Left lung (tissue), 14 donors: ENCODE measurements at regions of chr18 and their contacts with region 1.

Region 1: DNA sequence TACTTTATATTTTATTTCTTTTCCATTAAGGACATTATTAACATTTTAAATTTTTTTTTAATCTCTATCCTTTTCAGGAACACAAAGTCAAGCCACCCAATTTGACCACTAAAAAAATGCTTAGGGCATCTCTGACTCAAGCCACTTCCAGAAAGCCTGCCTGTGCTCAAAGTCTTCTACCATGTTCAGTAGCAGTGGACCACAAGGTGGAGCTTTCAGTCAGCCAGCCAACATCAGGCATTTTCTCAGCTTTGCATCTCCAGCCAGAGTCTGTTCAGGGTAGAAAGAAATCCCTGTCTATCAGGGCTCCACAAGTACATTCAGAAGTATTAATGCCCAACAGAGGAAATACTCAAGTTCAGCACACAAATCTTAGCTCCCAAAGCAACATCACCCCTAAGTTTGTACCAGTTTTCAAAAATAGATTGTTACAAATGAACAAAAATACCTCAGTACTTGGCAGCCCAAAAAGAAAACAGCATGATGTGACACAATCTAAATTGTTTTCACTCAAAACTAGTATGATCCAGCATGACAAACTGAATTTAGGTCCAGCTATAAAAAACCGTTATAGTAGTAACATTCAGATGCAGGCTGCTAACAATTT is 37.6 kb downstream of the C18orf63 start:
- DNase-seq: peak in 3 of 4 donors; percentile 46 to 84 (median 54)
- ATAC-seq: peak; percentile 95
- H3K4me3 ChIP-seq: no peak overlapping the region
- H3K27ac ChIP-seq: no peak overlapping the region
- H3K4me1 ChIP-seq: no peaks in the 10 kb centered on the region
- H3K27me3 ChIP-seq: no peaks in the 10 kb centered on the region
- CTCF ChIP-seq: peak; percentile 55 to 60

Region 2: GRCh38 chr18:74472312-74472711 is 119.0 kb after region 1 on chr18:
- intact Hi-C with region 1: loop called in 1 of 2 experiments (anchors 5 kb)
- DNase-seq: no peak
- ATAC-seq: no peak
- H3K4me3 ChIP-seq: no peak overlapping the region
- H3K27ac ChIP-seq: no peak overlapping the region
- H3K4me1 ChIP-seq: no peaks in the 10 kb centered on the region
- H3K27me3 ChIP-seq: no peaks in the 10 kb centered on the region
- CTCF ChIP-seq: no peak

Region 3: DNA sequence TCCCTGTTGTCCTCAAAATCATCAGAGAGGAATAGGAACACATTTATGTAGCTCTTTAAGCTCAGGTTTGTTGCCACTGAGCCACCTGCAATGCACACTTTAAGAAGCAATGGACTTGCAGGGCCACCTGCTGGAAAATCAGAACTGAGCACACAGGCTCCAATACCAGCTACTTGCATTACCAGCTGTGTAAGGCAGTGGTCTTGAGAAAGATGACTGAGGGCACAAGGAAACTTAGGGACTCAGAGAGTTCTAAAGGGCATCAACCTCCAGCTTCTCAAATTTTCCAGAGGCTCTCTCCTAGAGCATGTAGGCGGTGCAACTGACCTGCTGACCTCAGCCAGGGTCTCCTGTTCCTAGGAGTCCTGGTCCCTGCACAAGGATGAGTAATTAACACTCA is 140.4 kb after region 1 on chr18:
- intact Hi-C with region 1: loop called in 1 of 2 experiments (anchors 5 kb)
- DNase-seq: peak in 1 of 4 donors; percentile 62
- ATAC-seq: no peak
- H3K4me3 ChIP-seq: no peak overlapping the region
- H3K27ac ChIP-seq: no peak overlapping the region
- H3K4me1 ChIP-seq: peaks cover 13 to 28% of the 10 kb centered on the region in 2 donors
- H3K27me3 ChIP-seq: peaks cover 0 to 4% of the 10 kb centered on the region in 2 donors
- CTCF ChIP-seq: peak; percentile 43 to 44

Region 4: DNA sequence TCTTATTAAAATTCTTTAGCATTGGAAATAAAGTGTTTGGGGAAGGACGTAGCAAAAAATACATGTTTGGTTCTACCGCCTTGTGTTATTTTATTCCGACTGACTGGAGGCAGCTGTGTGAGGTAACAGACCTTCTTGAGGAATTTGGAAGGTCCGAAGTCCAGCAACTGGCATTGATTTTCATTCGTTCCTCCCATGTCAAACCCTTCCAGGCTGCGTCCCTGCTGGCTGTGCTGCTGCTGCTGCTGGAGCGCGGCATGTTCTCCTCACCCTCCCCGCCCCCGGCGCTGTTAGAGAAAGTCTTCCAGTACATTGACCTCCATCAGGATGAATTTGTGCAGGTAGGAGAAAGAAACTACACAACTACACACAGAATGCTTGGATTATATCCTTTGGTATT is 202.9 kb after region 1 on chr18:
- intact Hi-C with region 1: loop called in 1 of 2 experiments (anchors 5 kb)
- DNase-seq: no peak
- ATAC-seq: no peak
- H3K4me3 ChIP-seq: no peak overlapping the region
- H3K27ac ChIP-seq: no peak overlapping the region
- H3K4me1 ChIP-seq: no peaks in the 10 kb centered on the region
- H3K27me3 ChIP-seq: no peaks in the 10 kb centered on the region
- CTCF ChIP-seq: no peak

Region 5: GRCh38 chr18:74898965-74899364 is 545.7 kb after region 1 on chr18:
- intact Hi-C with region 1: no loop called
- DNase-seq: no peak
- ATAC-seq: peak; percentile 47
- H3K4me3 ChIP-seq: no peak overlapping the region
- H3K27ac ChIP-seq: no peak overlapping the region
- H3K4me1 ChIP-seq: peaks cover 0 to 5% of the 10 kb centered on the region in 2 donors
- H3K27me3 ChIP-seq: no peaks in the 10 kb centered on the region
- CTCF ChIP-seq: no peak